Activated CD4-positive, alpha-beta memory T cell treated with anti-CD3 and anti-CD28 coated beads for 36 hours (primary cell): ENCODE measurements at regions of chr5 and their contacts with region 1.

Region 1: DNA sequence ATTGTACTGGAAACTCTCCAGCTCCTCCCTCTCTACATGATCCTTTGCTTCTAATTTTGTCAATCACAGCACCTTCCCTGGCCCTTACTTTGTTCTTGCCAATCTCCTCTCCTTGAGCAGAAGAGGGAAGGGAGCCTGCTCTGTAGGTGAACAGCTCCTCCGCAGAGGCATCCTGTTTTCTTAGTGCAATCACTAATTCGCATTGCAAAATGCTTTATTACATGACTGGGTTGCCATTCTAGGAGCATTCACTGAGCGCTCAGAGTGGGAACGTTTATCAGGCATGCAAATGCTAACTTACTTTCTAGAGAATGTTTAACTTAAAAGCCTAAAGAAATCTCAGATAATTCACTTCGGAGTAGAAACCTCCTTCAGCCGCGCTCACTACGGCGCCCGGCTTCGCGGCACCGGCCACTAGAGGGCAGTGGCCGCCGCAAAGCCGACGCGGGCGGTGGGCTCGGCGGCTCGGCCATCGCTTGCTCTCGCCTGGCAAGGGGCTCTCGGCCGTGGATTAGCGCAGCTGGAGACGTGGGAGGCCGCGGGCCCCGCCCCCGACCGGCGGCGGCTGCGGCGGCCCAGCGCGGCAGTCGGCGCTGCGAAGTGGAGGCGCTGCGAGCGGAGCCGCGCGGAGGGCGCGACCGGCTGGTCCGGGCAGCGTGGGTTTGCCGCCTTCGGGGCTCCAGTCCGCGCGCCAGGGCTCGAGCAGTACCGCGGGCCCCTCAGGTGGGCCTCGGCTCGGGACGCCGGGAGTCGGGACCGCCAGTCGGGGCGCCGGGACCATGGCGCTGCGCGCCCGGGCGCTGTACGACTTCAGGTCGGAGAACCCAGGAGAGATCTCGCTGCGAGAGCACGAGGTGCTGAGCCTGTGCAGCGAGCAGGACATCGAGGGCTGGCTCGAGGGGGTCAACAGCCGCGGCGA is at the start of gene SNX18:
- DNase-seq: peak; percentile 92
- H3K4me3 Mint-ChIP-seq: peak within 1 kb of the TSS; percentile 64
- H3K27ac Mint-ChIP-seq: no peak within 1 kb of the TSS
- H3K4me1 Mint-ChIP-seq: peaks cover 42% of the 10 kb centered on the region
- H3K27me3 Mint-ChIP-seq: no peaks in the 10 kb centered on the region
- total RNA-seq, gene SNX18: 8.5 to 8.7 TPM

Region 2: GRCh38 chr5:54646356-54647101 is 129.1 kb after region 1 on chr5:
- CTCF ChIA-PET with region 1: interaction called, 4 read pairs
- POLR2A ChIA-PET with region 1: interaction called, 4 read pairs
- intact Hi-C with region 1: loop called (anchors 2 kb)
- DNase-seq: peak; percentile 85
- H3K4me3 Mint-ChIP-seq: peak overlapping the region; percentile 33
- H3K27ac Mint-ChIP-seq: peak overlapping the region; percentile 80
- H3K4me1 Mint-ChIP-seq: peaks cover 50% of the 10 kb centered on the region
- H3K27me3 Mint-ChIP-seq: no peaks in the 10 kb centered on the region

Region 3: GRCh38 chr5:54743997-54744788 is 226.8 kb after region 1 on chr5:
- CTCF ChIA-PET with region 1: interaction called, 5 read pairs
- POLR2A ChIA-PET with region 1: interaction called, 3 read pairs
- intact Hi-C with region 1: loop called (anchors 2 kb)
- DNase-seq: peak; percentile 75
- H3K4me3 Mint-ChIP-seq: peak overlapping the region; percentile 30
- H3K27ac Mint-ChIP-seq: peak overlapping the region; percentile 83
- H3K4me1 Mint-ChIP-seq: peaks cover 23% of the 10 kb centered on the region
- H3K27me3 Mint-ChIP-seq: no peaks in the 10 kb centered on the region

Region 4: DNA sequence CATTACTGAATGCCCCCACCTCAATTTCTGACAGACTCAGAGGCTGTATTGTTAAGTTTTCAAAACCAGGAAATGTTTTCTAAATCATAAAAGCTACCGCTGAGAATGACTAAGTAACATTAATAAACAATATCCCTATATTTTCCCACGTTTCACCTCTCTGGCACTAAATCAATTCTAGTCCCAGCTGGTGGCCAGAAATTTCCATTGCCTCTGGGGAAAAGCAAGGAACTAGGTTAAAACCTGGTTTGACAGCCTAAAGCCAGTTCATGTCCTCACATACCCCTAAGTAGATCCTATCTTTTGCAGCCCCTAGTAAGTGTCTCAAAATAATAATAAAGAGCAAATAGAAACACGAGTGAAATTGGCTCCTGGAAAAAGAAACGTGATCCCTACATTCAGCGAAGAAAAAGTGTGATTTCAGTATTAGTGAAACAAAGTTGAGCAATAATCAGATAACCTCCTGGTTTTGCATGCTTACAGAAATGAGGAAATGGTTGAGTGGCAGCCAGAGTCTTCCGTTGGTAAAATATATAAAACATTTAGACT is 357.0 kb after region 1 on chr5:
- CTCF ChIA-PET with region 1: interaction called, 10 read pairs
- POLR2A ChIA-PET with region 1: no interaction called
- intact Hi-C with region 1: no loop called
- DNase-seq: no peak
- H3K4me3 Mint-ChIP-seq: no peak overlapping the region
- H3K27ac Mint-ChIP-seq: no peak overlapping the region
- H3K4me1 Mint-ChIP-seq: no peaks in the 10 kb centered on the region
- H3K27me3 Mint-ChIP-seq: peaks cover 35% of the 10 kb centered on the region

Region 5: GRCh38 chr5:55146543-55147151 is 629.2 kb after region 1 on chr5:
- CTCF ChIA-PET with region 1: interaction called, 4 read pairs
- POLR2A ChIA-PET with region 1: no interaction called
- intact Hi-C with region 1: loop called (anchors 1 kb)
- DNase-seq: peak; percentile 89
- H3K4me3 Mint-ChIP-seq: no peak overlapping the region
- H3K27ac Mint-ChIP-seq: no peak overlapping the region
- H3K4me1 Mint-ChIP-seq: peaks cover 12% of the 10 kb centered on the region
- H3K27me3 Mint-ChIP-seq: peaks cover 1% of the 10 kb centered on the region